Mammary epithelial cell (primary cell): ENCODE measurements at regions of chr6 and their contacts with region 1.

Region 1: DNA sequence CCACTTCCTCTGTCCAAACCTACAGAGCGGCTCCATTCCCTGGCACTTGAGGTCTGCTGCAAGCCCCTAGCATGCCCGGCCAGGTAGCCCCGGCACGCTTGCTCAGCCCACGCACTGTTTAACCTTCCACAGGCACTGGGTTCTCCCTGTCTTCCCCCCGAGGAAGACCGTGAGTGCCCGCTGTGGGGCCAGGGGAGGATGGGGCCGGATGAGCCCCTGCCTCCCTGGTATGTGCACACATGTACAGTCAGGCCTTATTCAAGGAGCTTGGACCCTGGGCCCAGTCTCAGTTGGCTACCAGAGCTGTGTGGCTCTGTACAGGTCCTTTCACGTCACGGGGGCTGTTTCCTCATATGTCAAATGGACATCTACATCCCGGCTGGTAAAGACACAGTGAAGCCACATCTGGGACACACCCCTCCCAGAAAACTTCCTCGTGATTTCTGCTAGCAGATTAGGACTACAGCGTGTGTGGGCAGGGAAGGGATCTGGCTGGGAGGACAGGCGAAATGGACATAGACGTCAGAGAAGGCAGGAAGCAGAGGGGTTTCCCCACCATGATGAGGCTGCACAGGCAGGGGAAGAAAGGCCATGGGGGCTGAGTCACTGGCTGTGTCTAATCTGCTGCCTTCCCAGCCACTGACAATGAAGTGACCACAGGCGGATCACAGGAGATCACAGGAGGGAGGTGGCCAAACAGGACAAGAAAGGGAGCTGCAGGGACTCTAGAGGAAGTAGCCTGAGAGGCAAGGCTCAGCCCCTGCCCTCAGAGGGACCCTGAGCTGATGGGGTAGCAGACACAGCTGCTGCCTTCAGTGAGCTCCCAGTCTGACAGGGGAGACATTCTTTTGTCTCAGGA is 62.9 kb downstream of the MRPL14 start:
- DNase-seq: peak; percentile 99
- H3K4me3 ChIP-seq: no peak overlapping the region
- H3K27ac ChIP-seq: peak overlapping the region; percentile 85
- H3K4me1 ChIP-seq: peaks cover 73% of the 10 kb centered on the region
- H3K27me3 ChIP-seq: no peaks in the 10 kb centered on the region
- CTCF ChIP-seq: no peak

Region 2: GRCh38 chr6:43798688-43799444 is 265.5 kb before region 1 on chr6:
- CTCF ChIA-PET with region 1: no interaction called
- dilution Hi-C with region 1: no loop called
- in situ Hi-C with region 1: no loop called
- intact Hi-C with region 1: loop called (anchors 2 kb)
- DNase-seq: peak; percentile 85
- H3K4me3 ChIP-seq: no peak overlapping the region
- H3K27ac ChIP-seq: no peak overlapping the region
- H3K4me1 ChIP-seq: peaks cover 17% of the 10 kb centered on the region
- H3K27me3 ChIP-seq: no peaks in the 10 kb centered on the region
- CTCF ChIP-seq: no peak

Region 3: DNA sequence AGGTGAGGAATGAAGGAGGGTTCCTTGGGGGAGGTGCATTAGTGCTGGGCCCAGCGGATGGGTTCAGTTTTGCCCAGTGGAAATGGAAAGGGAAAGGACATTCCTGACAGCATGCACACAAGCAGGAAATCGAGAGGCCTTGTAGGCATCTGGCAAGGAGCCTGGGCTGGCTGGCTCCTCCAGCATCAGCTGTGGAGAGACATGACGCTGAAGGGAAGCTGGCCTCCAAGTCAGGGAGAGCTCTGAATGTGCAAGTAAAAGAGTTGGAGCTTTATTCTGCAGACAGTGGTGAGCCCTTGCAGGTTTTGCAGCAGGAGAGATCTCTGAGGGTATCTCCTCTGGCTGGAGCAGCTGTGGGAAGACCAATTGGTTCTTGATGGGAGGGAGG is 91.4 kb before region 1 on chr6:
- CTCF ChIA-PET with region 1: no interaction called
- dilution Hi-C with region 1: no loop called
- in situ Hi-C with region 1: no loop called
- intact Hi-C with region 1: loop called (anchors 5 kb)
- DNase-seq: peak; percentile 40
- H3K4me3 ChIP-seq: no peak overlapping the region
- H3K27ac ChIP-seq: no peak overlapping the region
- H3K4me1 ChIP-seq: peaks cover 24% of the 10 kb centered on the region
- H3K27me3 ChIP-seq: no peaks in the 10 kb centered on the region
- CTCF ChIP-seq: no peak

Region 4: DNA sequence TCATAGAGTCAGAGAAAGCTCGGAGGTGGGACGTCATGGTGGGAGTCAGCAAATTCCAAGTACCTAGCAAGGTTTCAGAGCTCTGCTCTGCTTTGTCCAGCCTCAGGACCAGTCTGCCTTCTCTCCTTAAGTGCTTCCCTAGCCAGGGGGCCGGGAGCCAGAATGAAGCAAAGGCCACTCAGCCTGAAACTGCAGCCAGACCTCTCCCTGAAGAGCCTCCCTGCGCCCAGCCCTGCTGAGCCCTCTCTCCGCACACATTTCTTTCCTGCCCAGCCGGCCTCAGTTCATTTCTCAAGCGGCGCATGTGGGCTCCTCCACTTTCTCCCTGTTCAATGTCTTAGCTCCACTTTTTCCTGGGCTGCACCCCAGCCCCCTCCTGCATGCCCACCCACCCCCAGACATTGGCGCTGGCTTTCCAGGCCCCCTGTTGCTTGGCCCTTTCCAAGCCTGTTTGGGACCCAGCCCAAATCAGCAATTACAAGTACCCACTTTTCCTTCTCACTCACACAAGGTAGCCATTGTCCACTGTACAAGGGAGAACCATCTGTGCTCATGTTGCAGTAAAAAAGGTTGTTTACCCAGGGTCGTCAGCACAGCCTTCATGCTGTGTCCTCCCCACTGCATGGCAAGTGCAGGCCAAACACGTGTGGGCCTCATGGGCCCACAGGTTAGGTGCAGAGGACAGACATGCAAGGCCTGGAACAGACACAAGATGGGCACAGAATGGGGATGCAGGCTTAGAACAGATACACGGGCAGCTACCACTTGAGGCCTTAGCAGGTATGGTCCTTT is 84.1 kb before region 1 on chr6:
- CTCF ChIA-PET with region 1: no interaction called
- dilution Hi-C with region 1: loop called (anchors 5 kb)
- in situ Hi-C with region 1: no loop called
- intact Hi-C with region 1: no loop called
- DNase-seq: no peak
- H3K4me3 ChIP-seq: no peak overlapping the region
- H3K27ac ChIP-seq: no peak overlapping the region
- H3K4me1 ChIP-seq: no peaks in the 10 kb centered on the region
- H3K27me3 ChIP-seq: no peaks in the 10 kb centered on the region
- CTCF ChIP-seq: no peak

Region 5: GRCh38 chr6:44176762-44177509 is 112.6 kb after region 1 on chr6:
- CTCF ChIA-PET with region 1: no interaction called
- dilution Hi-C with region 1: no loop called
- in situ Hi-C with region 1: no loop called
- intact Hi-C with region 1: no loop called
- DNase-seq: no peak
- H3K4me3 ChIP-seq: no peak overlapping the region
- H3K27ac ChIP-seq: no peak overlapping the region
- H3K4me1 ChIP-seq: peaks cover 12% of the 10 kb centered on the region
- H3K27me3 ChIP-seq: no peaks in the 10 kb centered on the region
- CTCF ChIP-seq: no peak